Dorsolateral prefrontal cortex (tissue), 120 donors: ENCODE measurements at regions of chr3 and their contacts with region 1.

Region 1: GRCh38 chr3:37967260-37967881 is 23.2 kb upstream of the VILL start:
- DNase-seq: peak in 7 of 10 donors; percentile 51 to 72 (median 68)
- H3K4me3 ChIP-seq: no peak overlapping the region
- H3K27ac ChIP-seq: peak overlapping the region in 37 of 59 donors; percentile 6 to 92 (median 74)
- H3K27me3 ChIP-seq: no peaks in the 10 kb centered on the region
- CTCF ChIP-seq: peak; percentile 36 to 92 (median 78)

Region 2: DNA sequence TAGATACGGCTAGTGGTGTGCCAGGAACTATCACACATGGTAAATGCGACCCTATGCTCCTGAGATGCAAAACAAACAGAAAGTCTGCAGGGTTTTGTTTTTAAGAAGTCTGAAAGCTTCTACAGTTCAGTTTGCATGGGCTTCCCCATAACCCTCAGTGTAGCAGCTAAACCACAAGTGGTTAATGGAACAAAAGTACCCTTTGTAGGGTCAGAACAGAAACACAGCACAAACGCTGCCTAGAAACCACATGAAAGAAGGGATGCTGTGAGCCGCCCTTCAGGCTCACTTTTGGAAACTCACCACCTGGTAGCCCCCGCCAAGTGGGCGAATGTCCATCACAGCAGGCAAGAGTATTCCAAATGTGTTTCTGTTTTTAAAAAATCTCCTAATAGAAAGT is 59.5 kb before region 1 on chr3:
- intact Hi-C with region 1: loop called in 1 of 2 experiments (anchors 5 kb)
- DNase-seq: peak in 4 of 10 donors; percentile 53 to 83 (median 61)
- H3K4me3 ChIP-seq: peak overlapping the region in 40 of 59 donors; percentile 1 to 51 (median 22)
- H3K27ac ChIP-seq: peak overlapping the region in 57 of 59 donors; percentile 17 to 93 (median 84)
- H3K27me3 ChIP-seq: no peaks in the 10 kb centered on the region
- CTCF ChIP-seq: peak in 2 of 56 donors; percentile 17 to 18